GM12878 (cell line): ENCODE measurements at regions of chr5 and their contacts with region 1.

Region 1: GRCh38 chr5:66306105-66306843 is 162.2 kb downstream of the SREK1 start:
- DNase-seq: no peak
- ATAC-seq: peak; percentile 95
- H3K4me3 ChIP-seq: no peak overlapping the region
- H3K27ac ChIP-seq: no peak overlapping the region
- H3K4me1 ChIP-seq: no peaks in the 10 kb centered on the region
- H3K27me3 ChIP-seq: peaks cover 0 to 1% of the 10 kb centered on the region in 2 experiments; a peak in 1 of 4 replicates
- CTCF ChIP-seq: peak; percentile 66 to 96 (median 89)
- EP300 ChIP-seq: no peak
- POLR2A ChIP-seq: no peak
- RAD21 ChIP-seq: peak; percentile 57

Region 2: DNA sequence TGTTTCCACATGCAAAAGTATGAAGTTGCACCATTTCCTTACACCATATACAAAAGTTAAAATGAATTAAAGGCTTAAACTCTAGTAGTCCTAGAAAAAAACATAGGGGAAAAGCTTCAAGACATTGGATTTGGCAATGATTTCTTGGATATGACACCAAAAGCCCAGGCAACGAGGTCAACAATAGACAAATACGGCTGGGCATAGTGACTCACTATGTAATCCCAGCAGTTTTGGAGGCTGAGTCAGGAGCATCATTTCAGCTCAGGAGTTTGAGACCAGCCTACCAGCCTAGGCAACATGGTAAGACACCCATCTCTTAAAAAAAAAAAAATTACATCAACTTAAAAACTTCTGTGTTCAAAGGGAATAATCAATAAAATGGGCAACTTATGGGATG is 193.1 kb before region 1 on chr5:
- CTCF ChIA-PET with region 1: no interaction called
- POLR2A ChIA-PET with region 1: no interaction called
- RAD21 ChIA-PET with region 1: no interaction called
- SMC1A ChIA-PET with region 1: no interaction called
- in situ Hi-C with region 1: no loop called
- intact Hi-C with region 1: no loop called
- DNase-seq: no peak
- ATAC-seq: no peak
- H3K4me3 ChIP-seq: no peak overlapping the region
- H3K27ac ChIP-seq: no peak overlapping the region
- H3K4me1 ChIP-seq: no peaks in the 10 kb centered on the region
- H3K27me3 ChIP-seq: no peaks in the 10 kb centered on the region
- CTCF ChIP-seq: no peak
- EP300 ChIP-seq: no peak
- POLR2A ChIP-seq: no peak
- RAD21 ChIP-seq: no peak

Region 3: DNA sequence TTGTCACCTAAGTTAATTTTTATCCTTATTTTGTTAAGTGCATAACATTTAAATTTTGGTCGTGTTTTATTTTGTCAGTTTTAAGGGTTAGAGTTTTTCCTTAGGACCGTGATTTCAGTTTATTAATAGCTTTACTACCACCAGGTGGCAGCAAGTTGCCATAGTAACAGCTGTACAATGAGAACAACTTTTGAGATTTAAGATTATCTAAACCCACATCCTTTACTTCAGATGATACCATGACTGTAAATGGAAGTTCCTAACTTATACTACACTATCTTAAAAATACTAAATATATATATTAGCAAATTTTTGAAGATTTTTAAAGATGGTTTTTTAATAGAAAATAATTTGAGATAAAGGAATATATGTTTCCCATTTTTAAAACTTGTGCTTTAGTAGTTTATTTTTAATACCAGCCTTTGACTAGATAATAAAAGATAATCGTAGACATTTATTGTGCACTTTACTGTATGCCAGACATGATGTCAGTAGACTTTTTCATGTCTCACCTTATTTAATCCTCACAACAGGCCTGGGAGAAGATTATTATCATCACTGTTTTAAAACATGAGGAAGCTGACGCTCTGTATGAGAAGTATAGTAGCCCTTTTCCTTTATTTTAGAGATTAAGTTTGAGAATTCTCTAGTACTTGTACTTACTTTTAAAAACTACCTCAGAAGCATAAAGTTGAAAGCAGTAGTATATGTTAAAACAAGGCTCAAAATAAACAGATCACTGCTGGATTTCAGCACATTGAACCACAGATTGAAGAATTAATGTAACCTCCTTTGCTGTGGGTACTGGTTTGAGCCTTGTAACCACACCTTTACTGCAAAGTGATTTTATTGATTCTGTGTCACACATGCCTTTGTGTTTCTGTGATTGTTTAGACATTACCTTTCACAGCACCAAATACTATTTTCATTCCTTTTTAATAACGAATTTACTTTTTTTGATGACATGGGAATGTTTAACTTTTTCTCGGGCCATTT is 134.6 kb before region 1 on chr5:
- CTCF ChIA-PET with region 1: interaction called, 12 read pairs
- POLR2A ChIA-PET with region 1: no interaction called
- RAD21 ChIA-PET with region 1: interaction called, 14 read pairs
- SMC1A ChIA-PET with region 1: interaction called, 4 read pairs
- in situ Hi-C with region 1: no loop called
- intact Hi-C with region 1: loop called (anchors 5 kb)
- DNase-seq: no peak
- ATAC-seq: peak; percentile 70
- H3K4me3 ChIP-seq: no peak overlapping the region
- H3K27ac ChIP-seq: no peak overlapping the region
- H3K4me1 ChIP-seq: no peaks in the 10 kb centered on the region; the same call in 1 of the 2 replicates
- H3K27me3 ChIP-seq: no peaks in the 10 kb centered on the region
- CTCF ChIP-seq: peak; percentile 27 to 57 (median 40); a peak in 5 of 6 replicates
- EP300 ChIP-seq: no peak
- POLR2A ChIP-seq: no peak
- RAD21 ChIP-seq: peak; percentile 36; the same call in 1 of the 2 replicates

Region 4: GRCh38 chr5:66324357-66324756 is 18.1 kb after region 1 on chr5:
- CTCF ChIA-PET with region 1: interaction called, 33 read pairs
- POLR2A ChIA-PET with region 1: no interaction called
- RAD21 ChIA-PET with region 1: interaction called, 6 read pairs
- SMC1A ChIA-PET with region 1: interaction called, 4 read pairs
- in situ Hi-C with region 1: no loop called
- intact Hi-C with region 1: no loop called
- DNase-seq: no peak
- ATAC-seq: no peak
- H3K4me3 ChIP-seq: no peak overlapping the region
- H3K27ac ChIP-seq: no peak overlapping the region
- H3K4me1 ChIP-seq: no peaks in the 10 kb centered on the region
- H3K27me3 ChIP-seq: no peaks in the 10 kb centered on the region; a peak in 1 of 4 replicates
- CTCF ChIP-seq: no peak
- EP300 ChIP-seq: no peak
- POLR2A ChIP-seq: no peak
- RAD21 ChIP-seq: no peak

Region 5: DNA sequence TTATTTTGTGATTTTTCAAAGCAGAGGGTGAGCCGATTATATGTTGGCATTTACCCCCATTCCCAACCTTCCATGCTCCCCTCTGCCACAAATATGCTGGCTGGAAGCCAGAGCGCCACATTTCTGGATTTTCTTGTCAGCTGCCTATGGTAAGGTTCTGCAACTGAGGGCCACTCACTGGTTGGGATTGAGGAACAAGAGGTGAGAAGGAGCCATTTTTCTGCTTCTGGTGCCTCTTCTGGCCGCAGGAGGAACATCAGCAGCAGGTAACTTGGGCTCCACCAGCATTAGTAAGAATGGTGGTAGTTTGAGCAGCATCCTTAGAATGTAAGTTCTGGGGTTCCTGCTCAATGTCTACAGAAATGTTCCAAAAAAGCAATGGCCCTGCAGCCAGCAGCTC is 130.4 kb after region 1 on chr5:
- CTCF ChIA-PET with region 1: interaction called, 4 read pairs
- POLR2A ChIA-PET with region 1: no interaction called
- RAD21 ChIA-PET with region 1: no interaction called
- SMC1A ChIA-PET with region 1: no interaction called
- in situ Hi-C with region 1: no loop called
- intact Hi-C with region 1: loop called (anchors 5 kb)
- DNase-seq: no peak
- ATAC-seq: peak; percentile 69
- H3K4me3 ChIP-seq: no peak overlapping the region
- H3K27ac ChIP-seq: no peak overlapping the region
- H3K4me1 ChIP-seq: no peaks in the 10 kb centered on the region
- H3K27me3 ChIP-seq: no peaks in the 10 kb centered on the region
- CTCF ChIP-seq: peak; percentile 32 to 62 (median 50)
- EP300 ChIP-seq: no peak
- POLR2A ChIP-seq: no peak
- RAD21 ChIP-seq: peak; percentile 46

Region 6: DNA sequence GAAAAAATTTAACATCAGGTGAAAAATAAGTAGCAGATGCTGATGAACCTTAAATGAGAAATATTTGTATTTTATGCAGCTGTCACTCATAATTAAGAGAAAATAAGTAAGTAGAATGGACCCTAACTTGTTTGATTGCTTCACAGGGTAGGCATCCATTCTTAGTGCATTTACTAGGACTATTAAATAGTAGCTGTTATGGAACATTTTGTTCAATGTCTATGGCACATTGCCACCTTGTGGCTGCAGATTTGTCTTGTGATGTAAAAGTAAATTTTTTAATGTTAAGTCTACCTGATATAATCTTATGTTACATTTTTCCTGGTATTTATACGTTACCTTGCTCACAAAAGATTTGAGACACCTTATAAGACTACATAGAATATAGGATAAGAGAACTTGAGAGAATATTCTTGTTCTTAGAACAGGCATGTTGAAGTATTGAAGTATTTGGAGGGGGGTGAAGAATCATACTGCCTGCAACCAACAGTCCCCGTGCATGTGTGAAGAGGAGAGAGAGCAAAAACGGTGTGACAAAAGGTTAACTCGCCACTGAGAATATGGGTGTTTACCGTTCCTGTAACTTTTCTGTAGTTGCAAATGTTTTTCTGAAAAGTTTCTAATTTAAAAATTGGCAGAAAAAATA is 451.0 kb after region 1 on chr5:
- CTCF ChIA-PET with region 1: interaction called, 137 read pairs
- POLR2A ChIA-PET with region 1: interaction called, 3 read pairs
- RAD21 ChIA-PET with region 1: interaction called, 35 read pairs
- SMC1A ChIA-PET with region 1: interaction called, 52 read pairs
- in situ Hi-C with region 1: loop called (anchors 5 kb)
- intact Hi-C with region 1: loop called (anchors 1 kb)
- DNase-seq: no peak
- ATAC-seq: peak; percentile 46
- H3K4me3 ChIP-seq: no peak overlapping the region
- H3K27ac ChIP-seq: no peak overlapping the region
- H3K4me1 ChIP-seq: no peaks in the 10 kb centered on the region
- H3K27me3 ChIP-seq: no peaks in the 10 kb centered on the region
- CTCF ChIP-seq: peak; percentile 32 to 55 (median 47); a peak in 5 of 6 replicates
- EP300 ChIP-seq: no peak
- POLR2A ChIP-seq: no peak
- RAD21 ChIP-seq: peak; percentile 78

Region 7: DNA sequence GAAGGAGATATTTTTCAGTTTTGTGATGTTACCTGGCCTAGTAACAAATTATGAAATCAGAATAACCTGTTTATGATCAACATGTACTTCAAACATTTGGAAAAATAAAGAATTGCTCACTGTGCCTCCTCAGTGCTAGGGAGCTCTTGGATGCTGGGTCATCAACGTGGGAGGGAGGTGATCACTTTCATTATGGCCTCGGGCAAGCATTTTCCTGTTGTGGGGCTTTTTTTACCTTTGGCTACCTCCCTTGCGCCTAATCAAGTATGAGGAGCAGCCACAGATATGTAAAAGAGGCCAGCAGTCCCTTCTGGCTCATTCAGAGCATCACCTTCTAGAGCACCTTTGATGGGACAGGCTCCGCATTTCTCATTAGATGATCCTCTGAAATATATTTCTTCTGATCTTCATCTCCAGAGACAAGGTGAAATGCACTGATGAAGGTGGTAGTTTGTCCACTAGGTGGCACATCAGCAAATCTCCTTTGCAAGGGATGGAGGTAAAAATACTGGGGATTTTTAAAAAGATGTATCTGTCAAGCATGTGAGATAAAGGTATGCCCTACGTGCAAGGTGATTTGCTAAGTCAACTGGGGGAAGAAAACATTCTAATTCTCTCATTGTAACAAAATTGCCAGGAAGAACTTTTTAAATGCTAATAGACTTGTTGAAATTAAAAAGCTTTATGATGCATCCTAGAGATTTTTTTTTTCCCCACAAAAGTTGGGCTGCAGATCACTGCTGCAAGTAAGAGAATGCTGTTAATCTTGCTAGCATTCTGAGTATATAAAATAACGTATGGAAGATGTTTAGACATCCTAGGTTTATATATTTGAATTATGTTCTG is 508.1 kb after region 1 on chr5:
- CTCF ChIA-PET with region 1: interaction called, 25 read pairs
- POLR2A ChIA-PET with region 1: no interaction called
- RAD21 ChIA-PET with region 1: interaction called, 5 read pairs
- SMC1A ChIA-PET with region 1: no interaction called
- in situ Hi-C with region 1: no loop called
- intact Hi-C with region 1: no loop called
- DNase-seq: peak; percentile 5
- ATAC-seq: peak; percentile 84
- H3K4me3 ChIP-seq: no peak overlapping the region
- H3K27ac ChIP-seq: no peak overlapping the region
- H3K4me1 ChIP-seq: no peaks in the 10 kb centered on the region
- H3K27me3 ChIP-seq: peaks cover 1 to 3% of the 10 kb centered on the region in 2 experiments; a peak in 2 of 4 replicates
- CTCF ChIP-seq: peak; percentile 61 to 75 (median 63)
- EP300 ChIP-seq: no peak
- POLR2A ChIP-seq: no peak
- RAD21 ChIP-seq: peak; percentile 64

Region 8: GRCh38 chr5:67047160-67047559 is 740.9 kb after region 1 on chr5:
- CTCF ChIA-PET with region 1: no interaction called
- POLR2A ChIA-PET with region 1: no interaction called
- RAD21 ChIA-PET with region 1: no interaction called
- SMC1A ChIA-PET with region 1: no interaction called
- in situ Hi-C with region 1: no loop called
- intact Hi-C with region 1: no loop called
- DNase-seq: no peak
- ATAC-seq: no peak
- H3K4me3 ChIP-seq: no peak overlapping the region
- H3K27ac ChIP-seq: no peak overlapping the region
- H3K4me1 ChIP-seq: no peaks in the 10 kb centered on the region
- H3K27me3 ChIP-seq: no peaks in the 10 kb centered on the region
- CTCF ChIP-seq: no peak
- EP300 ChIP-seq: no peak
- POLR2A ChIP-seq: no peak
- RAD21 ChIP-seq: no peak